A549 (cell line): ENCODE measurements at regions of chr2 and their contacts with region 1.

Region 1: GRCh38 chr2:25664183-25664964 is 9.0 kb downstream of the DTNB start:
- DNase-seq: peak; percentile 83 to 91
- ATAC-seq: peak; percentile 99 to 100
- H3K4me3 ChIP-seq: no peak overlapping the region
- H3K27ac ChIP-seq: peak overlapping the region; percentile 8 to 69; a peak in 4 of 6 replicates
- H3K4me1 ChIP-seq: peaks cover 13% of the 10 kb centered on the region
- CTCF ChIP-seq: peak; percentile 96
- EP300 ChIP-seq: no peak
- POLR2A ChIP-seq: no peak
- RAD21 ChIP-seq: peak; percentile 96 to 99

Region 2: GRCh38 chr2:25283921-25284320 is 380.5 kb before region 1 on chr2:
- CTCF ChIA-PET with region 1: no interaction called
- POLR2A ChIA-PET with region 1: no interaction called
- DNase-seq: no peak
- ATAC-seq: no peak
- H3K4me3 ChIP-seq: no peak overlapping the region
- H3K27ac ChIP-seq: no peak overlapping the region
- H3K4me1 ChIP-seq: no peaks in the 10 kb centered on the region
- CTCF ChIP-seq: no peak
- EP300 ChIP-seq: no peak
- POLR2A ChIP-seq: no peak
- RAD21 ChIP-seq: no peak

Region 3: DNA sequence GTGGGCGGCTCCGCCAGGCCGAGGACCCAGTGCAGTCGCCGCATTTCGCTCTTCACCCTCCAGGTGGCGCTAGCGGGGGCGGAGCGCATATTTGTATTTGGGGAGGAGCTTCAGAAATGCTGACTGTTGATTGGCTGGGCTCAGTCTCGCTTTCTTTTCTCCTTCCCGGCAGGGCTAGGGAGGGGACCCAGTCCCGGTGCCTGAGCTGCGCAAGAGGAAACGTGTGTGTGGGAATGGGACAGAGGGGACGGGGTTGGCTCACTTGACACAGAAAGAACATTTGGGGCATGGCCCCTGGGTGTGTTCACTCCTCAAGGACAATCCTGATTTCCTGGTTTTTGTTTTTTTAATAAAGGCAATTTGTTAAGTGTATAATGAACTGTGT is 302.3 kb before region 1 on chr2:
- CTCF ChIA-PET with region 1: interaction called, 18 read pairs
- POLR2A ChIA-PET with region 1: no interaction called
- DNase-seq: peak; percentile 94 to 98
- ATAC-seq: peak; percentile 93 to 98
- H3K4me3 ChIP-seq: peak overlapping the region; percentile 30
- H3K27ac ChIP-seq: peak overlapping the region; percentile 58 to 79
- H3K4me1 ChIP-seq: peaks cover 7% of the 10 kb centered on the region; the same call in 2 of the 3 replicates
- CTCF ChIP-seq: peak; percentile 98
- EP300 ChIP-seq: no peak
- POLR2A ChIP-seq: peak; percentile 80
- RAD21 ChIP-seq: peak; percentile 44 to 62

Region 4: DNA sequence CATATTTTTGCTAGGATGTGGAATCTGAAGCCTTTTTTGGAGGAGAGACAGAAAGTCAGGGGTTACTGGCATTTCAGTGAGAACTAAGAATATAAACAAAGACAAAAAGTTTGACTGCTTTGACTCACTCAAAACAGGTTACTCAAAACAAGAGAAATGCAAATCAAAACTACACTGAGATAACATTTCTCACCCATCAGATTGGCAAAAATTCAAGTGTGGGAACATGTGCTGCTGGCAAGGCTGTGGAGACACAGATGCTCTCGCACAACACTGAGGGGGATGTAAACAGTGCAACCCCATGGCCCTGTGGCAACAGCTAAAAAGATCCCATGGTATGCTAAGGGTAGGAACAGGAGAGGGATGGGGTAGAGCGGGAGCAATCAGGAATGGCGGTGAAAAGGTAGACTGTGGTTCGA is 77.6 kb before region 1 on chr2:
- CTCF ChIA-PET with region 1: interaction called, 21 read pairs
- POLR2A ChIA-PET with region 1: no interaction called
- DNase-seq: no peak
- ATAC-seq: peak; percentile 44; a peak in 3 of 6 replicates
- H3K4me3 ChIP-seq: no peak overlapping the region
- H3K27ac ChIP-seq: no peak overlapping the region
- H3K4me1 ChIP-seq: peaks cover 11% of the 10 kb centered on the region
- CTCF ChIP-seq: no peak
- EP300 ChIP-seq: no peak
- POLR2A ChIP-seq: no peak
- RAD21 ChIP-seq: no peak

Region 5: DNA sequence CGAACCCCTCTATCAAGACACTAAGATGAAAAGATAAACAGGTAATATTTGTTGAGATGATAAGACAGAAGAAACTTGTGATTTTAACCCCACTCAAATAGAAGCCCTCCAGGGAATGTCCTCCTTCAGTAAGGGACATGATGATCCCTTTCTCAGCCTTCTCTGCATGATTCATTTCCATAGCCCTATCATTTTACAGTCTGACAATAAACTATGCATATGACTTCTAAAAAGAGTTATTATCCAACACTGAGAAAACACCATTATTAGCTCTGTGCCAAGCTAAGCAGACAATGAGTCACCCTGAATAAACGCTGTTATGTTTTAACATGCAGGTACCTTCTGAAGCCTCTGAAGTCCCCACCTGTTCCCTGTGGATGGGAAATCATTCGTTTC is 45.7 kb before region 1 on chr2:
- CTCF ChIA-PET with region 1: interaction called, 414 read pairs
- POLR2A ChIA-PET with region 1: no interaction called
- DNase-seq: peak; percentile 21 to 73
- ATAC-seq: peak; percentile 87 to 91
- H3K4me3 ChIP-seq: no peak overlapping the region
- H3K27ac ChIP-seq: peak overlapping the region; percentile 72
- H3K4me1 ChIP-seq: peaks cover 39% of the 10 kb centered on the region
- CTCF ChIP-seq: no peak
- EP300 ChIP-seq: no peak
- POLR2A ChIP-seq: no peak
- RAD21 ChIP-seq: no peak

Region 6: GRCh38 chr2:25644396-25644795 is 20.0 kb before region 1 on chr2:
- CTCF ChIA-PET with region 1: interaction called, 43 read pairs
- POLR2A ChIA-PET with region 1: no interaction called
- DNase-seq: no peak
- ATAC-seq: no peak
- H3K4me3 ChIP-seq: no peak overlapping the region
- H3K27ac ChIP-seq: no peak overlapping the region
- H3K4me1 ChIP-seq: no peaks in the 10 kb centered on the region
- CTCF ChIP-seq: no peak
- EP300 ChIP-seq: no peak
- POLR2A ChIP-seq: no peak
- RAD21 ChIP-seq: no peak

Region 7: GRCh38 chr2:25690058-25690457 is 25.7 kb after region 1 on chr2:
- CTCF ChIA-PET with region 1: interaction called, 22 read pairs
- POLR2A ChIA-PET with region 1: no interaction called
- DNase-seq: peak in 1 of 2 experiments; percentile 33
- ATAC-seq: peak; percentile 33 to 39; a peak in 3 of 6 replicates
- H3K4me3 ChIP-seq: no peak overlapping the region
- H3K27ac ChIP-seq: no peak overlapping the region
- H3K4me1 ChIP-seq: 0 out of 3 replicates have a peak, but pooled peaks cover 4% of the 10 kb centered on the region
- CTCF ChIP-seq: no peak
- EP300 ChIP-seq: no peak
- POLR2A ChIP-seq: no peak
- RAD21 ChIP-seq: no peak

Region 8: DNA sequence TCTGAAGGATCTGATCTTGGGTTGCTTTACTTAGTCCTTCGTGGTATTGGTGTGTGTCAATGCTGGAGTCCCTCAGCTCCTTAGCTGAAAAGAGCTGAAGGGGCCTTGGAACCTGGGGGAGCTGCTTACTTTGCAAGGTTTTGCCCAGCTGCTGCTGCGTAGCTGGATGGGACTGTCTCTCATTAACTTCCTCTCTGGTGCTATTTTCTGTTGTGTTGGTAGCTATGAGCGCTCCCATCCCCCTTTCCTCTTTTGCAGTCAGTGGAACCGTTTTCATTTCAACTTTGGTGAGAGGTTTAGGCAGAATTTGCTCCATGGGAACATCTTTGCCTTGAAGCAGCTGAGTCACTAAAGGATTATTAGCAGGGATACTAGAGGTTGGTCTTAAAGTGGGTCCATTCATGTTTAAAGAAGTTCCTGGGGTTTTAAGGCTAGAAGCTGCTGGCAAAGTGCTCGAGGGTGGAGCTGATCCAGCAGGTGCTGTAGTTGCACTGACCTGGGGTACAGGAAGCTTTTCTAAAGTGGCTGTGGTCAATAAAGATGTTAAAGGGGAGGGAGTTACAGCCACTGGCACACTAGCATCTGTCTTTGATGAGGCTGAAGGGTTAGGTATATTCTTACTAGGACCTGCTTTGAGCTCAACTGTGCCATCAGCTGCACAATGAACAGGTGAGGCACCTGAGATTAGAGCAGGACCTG is 78.9 kb after region 1 on chr2:
- CTCF ChIA-PET with region 1: interaction called, 14 read pairs
- POLR2A ChIA-PET with region 1: interaction called, 5 read pairs
- DNase-seq: no peak
- ATAC-seq: no peak
- H3K4me3 ChIP-seq: no peak overlapping the region
- H3K27ac ChIP-seq: no peak overlapping the region
- H3K4me1 ChIP-seq: no peaks in the 10 kb centered on the region
- CTCF ChIP-seq: no peak
- EP300 ChIP-seq: no peak
- POLR2A ChIP-seq: no peak
- RAD21 ChIP-seq: no peak